Endothelial cell of umbilical vein (primary cell): ENCODE measurements at regions of chr17 and their contacts with region 1.

Region 1: GRCh38 chr17:29533976-29534375 is 32.9 kb downstream of the ABHD15 start:
- DNase-seq: no peak
- H3K4me3 ChIP-seq: no peak overlapping the region
- H3K27ac ChIP-seq: no peak overlapping the region
- H3K4me1 ChIP-seq: no peaks in the 10 kb centered on the region
- H3K27me3 ChIP-seq: no peaks in the 10 kb centered on the region
- CTCF ChIP-seq: no peak
- POLR2A ChIP-seq: no peak

Region 2: GRCh38 chr17:29461483-29462206 is 72.3 kb before region 1 on chr17:
- CTCF ChIA-PET with region 1: no interaction called
- POLR2A ChIA-PET with region 1: no interaction called
- dilution Hi-C with region 1: no loop called
- intact Hi-C with region 1: no loop called
- DNase-seq: no peak
- H3K4me3 ChIP-seq: no peak overlapping the region
- H3K27ac ChIP-seq: no peak overlapping the region
- H3K4me1 ChIP-seq: no peaks in the 10 kb centered on the region
- H3K27me3 ChIP-seq: no peaks in the 10 kb centered on the region
- CTCF ChIP-seq: no peak
- POLR2A ChIP-seq: no peak

Region 3: GRCh38 chr17:29483503-29483902 is 50.5 kb before region 1 on chr17:
- CTCF ChIA-PET with region 1: interaction called, 12 read pairs
- POLR2A ChIA-PET with region 1: no interaction called
- dilution Hi-C with region 1: no loop called
- intact Hi-C with region 1: no loop called
- DNase-seq: no peak
- H3K4me3 ChIP-seq: no peak overlapping the region
- H3K27ac ChIP-seq: no peak overlapping the region
- H3K4me1 ChIP-seq: no peaks in the 10 kb centered on the region
- H3K27me3 ChIP-seq: no peaks in the 10 kb centered on the region
- CTCF ChIP-seq: no peak
- POLR2A ChIP-seq: no peak

Region 4: DNA sequence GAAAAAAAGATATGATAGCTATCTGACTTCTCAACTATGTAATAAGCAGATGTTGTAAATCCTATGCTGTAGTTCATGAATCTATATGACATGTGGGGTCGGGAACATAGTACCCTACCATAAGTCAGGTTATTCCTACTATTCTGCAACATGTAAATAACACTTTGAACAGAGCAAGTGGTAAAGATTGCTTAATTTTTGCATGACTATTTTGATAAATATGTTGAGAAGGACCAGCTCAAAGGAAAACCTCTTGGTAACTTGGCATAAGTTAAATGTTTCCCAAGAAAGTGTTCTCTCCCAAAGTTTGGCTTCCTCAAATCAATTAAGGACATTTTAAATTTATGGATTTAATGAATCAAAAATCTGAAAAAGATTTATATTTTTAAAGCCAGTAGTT is 29.3 kb before region 1 on chr17:
- CTCF ChIA-PET with region 1: interaction called, 10 read pairs
- POLR2A ChIA-PET with region 1: interaction called, 4 read pairs
- dilution Hi-C with region 1: no loop called
- intact Hi-C with region 1: no loop called
- DNase-seq: no peak
- H3K4me3 ChIP-seq: no peak overlapping the region
- H3K27ac ChIP-seq: no peak overlapping the region
- H3K4me1 ChIP-seq: no peaks in the 10 kb centered on the region
- H3K27me3 ChIP-seq: no peaks in the 10 kb centered on the region
- CTCF ChIP-seq: no peak
- POLR2A ChIP-seq: no peak

Region 5: DNA sequence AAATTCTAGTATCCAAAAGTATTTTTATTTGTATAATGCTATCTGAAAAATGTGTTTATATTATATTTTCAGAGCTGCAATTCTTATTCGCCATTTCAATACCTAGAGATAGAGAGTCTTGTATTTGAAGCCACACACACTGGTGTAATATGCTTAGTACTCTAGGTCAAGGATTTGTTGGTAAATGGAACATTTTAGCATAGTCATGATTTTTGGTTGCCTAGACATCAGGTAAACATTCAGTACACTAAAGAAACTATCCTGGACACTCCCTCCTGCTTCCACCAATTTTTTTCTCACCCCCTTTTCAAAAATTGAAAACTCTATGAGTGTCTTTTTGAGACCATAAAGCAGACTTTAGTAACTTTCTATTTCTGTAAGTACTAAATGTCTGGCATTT is 12.1 kb after region 1 on chr17:
- CTCF ChIA-PET with region 1: interaction called, 12 read pairs
- POLR2A ChIA-PET with region 1: no interaction called
- dilution Hi-C with region 1: no loop called
- intact Hi-C with region 1: no loop called
- DNase-seq: no peak
- H3K4me3 ChIP-seq: no peak overlapping the region
- H3K27ac ChIP-seq: no peak overlapping the region
- H3K4me1 ChIP-seq: no peaks in the 10 kb centered on the region
- H3K27me3 ChIP-seq: no peaks in the 10 kb centered on the region
- CTCF ChIP-seq: no peak
- POLR2A ChIP-seq: no peak

Region 6: DNA sequence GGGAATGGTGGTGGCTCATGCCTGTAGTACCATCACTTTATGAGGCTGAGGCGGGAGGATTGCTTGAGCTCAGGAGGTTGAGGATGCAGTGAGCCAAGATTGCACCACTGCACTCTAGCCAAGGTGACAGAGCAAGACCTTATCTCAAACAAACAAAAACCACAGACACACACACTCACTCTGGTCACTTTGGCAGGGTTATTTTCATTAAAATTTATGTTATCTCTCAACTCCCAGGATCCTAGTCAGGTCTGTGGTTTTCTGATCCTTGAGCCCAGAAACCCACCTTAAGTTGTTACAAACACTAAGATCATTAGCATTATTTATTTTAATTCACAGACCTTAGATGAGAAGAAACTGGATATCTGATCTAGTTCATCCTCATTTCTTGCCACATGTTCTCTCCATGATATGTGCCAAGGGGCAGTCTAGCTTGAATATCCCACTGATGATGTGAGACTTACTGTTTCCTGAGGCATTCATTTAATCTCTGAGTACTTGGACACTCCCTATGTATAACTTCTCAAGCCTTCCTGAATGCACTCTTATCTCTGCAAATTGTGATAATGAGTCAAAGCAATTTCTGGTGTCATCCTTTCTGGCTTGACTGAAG is 23.2 kb after region 1 on chr17:
- CTCF ChIA-PET with region 1: interaction called, 16 read pairs
- POLR2A ChIA-PET with region 1: no interaction called
- dilution Hi-C with region 1: no loop called
- intact Hi-C with region 1: no loop called
- DNase-seq: no peak
- H3K4me3 ChIP-seq: no peak overlapping the region
- H3K27ac ChIP-seq: no peak overlapping the region
- H3K4me1 ChIP-seq: no peaks in the 10 kb centered on the region
- H3K27me3 ChIP-seq: no peaks in the 10 kb centered on the region
- CTCF ChIP-seq: no peak
- POLR2A ChIP-seq: no peak

Region 7: DNA sequence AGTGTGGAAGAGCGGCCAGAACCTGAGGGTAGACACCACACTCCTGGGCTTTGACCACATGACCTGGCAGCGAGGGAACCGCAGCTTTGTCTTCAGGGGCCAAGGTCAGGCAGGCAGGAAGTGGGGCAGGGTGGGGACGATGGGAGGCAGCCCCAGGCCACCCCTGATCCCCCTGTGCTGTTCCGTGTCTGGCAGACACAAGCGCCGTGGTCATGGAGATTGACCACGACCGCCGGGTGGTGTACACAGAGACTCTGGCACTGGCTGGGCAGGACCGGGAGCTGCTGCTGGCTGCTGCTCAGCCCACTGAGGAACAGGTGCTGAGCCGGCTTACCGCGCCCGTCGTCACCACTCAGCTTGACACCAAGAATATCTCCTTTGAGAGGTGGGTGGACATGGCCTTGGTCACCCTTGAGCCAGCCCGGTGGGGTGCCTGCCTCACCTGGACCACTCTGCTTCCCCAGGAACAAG is 75.0 kb after region 1 on chr17:
- CTCF ChIA-PET with region 1: no interaction called
- POLR2A ChIA-PET with region 1: no interaction called
- dilution Hi-C with region 1: no loop called
- intact Hi-C with region 1: no loop called
- DNase-seq: no peak
- H3K4me3 ChIP-seq: no peak overlapping the region
- H3K27ac ChIP-seq: no peak overlapping the region
- H3K4me1 ChIP-seq: peaks cover 8% of the 10 kb centered on the region
- H3K27me3 ChIP-seq: no peaks in the 10 kb centered on the region
- CTCF ChIP-seq: no peak
- POLR2A ChIP-seq: no peak